ENCODE measurements at regions of chr17 and their contacts with region 1.

Region 1: GRCh38 chr17:35312790-35313711 is 60.4 kb downstream of the SLFN11 start:
- DNase-seq: peak; percentile 94
- ATAC-seq: peak; percentile 93
- H3K4me3 Mint-ChIP-seq: peak overlapping the region; percentile 89
- H3K27ac Mint-ChIP-seq: peak overlapping the region; percentile 90
- H3K4me1 Mint-ChIP-seq: peaks cover 27% of the 10 kb centered on the region
- H3K27me3 Mint-ChIP-seq: no peaks in the 10 kb centered on the region

Region 2: DNA sequence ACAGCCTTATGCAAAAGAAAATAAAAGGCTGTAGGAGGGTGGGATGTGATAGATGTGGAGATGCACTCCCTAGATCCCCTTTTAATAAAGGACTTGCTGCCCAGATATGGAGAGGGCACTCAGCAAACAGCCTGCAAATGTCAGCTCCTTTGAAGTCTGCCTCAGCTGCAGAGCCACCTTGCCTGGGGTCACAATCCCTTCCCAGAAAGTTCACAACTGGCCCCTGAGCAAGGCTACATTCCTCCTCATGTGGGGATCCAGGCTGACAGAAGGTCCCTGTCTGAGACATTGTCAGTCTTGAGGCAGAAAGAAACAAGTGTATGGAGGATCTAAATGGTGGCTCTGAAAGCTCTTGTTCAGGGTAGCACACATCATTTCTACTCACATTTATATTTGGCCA is 24.3 kb after region 1 on chr17:
- CTCF ChIA-PET with region 1: interaction called, 14 read pairs
- POLR2A ChIA-PET with region 1: no interaction called
- DNase-seq: no peak
- ATAC-seq: no peak
- H3K4me3 Mint-ChIP-seq: no peak overlapping the region
- H3K27ac Mint-ChIP-seq: no peak overlapping the region
- H3K4me1 Mint-ChIP-seq: peaks cover 26% of the 10 kb centered on the region
- H3K27me3 Mint-ChIP-seq: peaks cover 21% of the 10 kb centered on the region

Region 3: DNA sequence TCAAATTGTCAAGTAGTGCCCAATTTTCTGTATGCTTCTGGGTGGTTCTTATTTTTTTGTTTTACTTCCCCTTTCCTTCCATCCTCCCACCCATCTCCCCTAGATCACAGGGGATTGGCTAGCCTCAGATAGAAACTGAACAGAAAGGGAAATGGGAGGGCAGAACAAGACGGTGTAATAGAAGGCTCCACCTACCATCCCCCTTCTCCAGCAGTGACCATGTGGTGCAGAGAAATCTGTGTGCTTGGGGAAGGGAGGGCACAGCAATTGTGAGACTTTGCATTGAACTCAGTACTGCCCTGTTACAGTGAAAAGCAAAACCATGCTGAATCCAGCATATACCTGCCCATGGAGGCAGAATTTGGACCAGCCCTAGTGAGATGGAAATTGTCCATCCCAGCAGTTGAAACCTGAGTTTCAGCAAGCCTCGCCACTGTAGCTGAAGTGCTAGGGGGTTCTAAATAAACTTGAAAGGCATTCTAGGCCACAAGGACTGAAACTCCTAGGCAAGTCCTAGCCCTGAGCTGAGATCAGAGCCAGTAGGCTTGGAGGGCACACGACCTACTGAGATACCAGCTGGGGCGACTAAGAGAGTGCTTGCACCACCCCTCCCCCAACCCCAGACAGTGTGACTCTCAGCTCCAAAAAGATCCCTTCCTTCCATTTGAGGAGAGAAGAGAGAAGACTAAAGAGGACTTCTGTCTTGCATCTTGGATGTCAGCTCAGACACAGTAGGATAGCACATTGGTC is 55.2 kb after region 1 on chr17:
- CTCF ChIA-PET with region 1: interaction called, 19 read pairs
- POLR2A ChIA-PET with region 1: interaction called, 14 read pairs
- DNase-seq: peak; percentile 64
- ATAC-seq: peak; percentile 91
- H3K4me3 Mint-ChIP-seq: peak overlapping the region; percentile 23
- H3K27ac Mint-ChIP-seq: peak overlapping the region; percentile 70
- H3K4me1 Mint-ChIP-seq: peaks cover 62% of the 10 kb centered on the region
- H3K27me3 Mint-ChIP-seq: no peaks in the 10 kb centered on the region

Region 4: DNA sequence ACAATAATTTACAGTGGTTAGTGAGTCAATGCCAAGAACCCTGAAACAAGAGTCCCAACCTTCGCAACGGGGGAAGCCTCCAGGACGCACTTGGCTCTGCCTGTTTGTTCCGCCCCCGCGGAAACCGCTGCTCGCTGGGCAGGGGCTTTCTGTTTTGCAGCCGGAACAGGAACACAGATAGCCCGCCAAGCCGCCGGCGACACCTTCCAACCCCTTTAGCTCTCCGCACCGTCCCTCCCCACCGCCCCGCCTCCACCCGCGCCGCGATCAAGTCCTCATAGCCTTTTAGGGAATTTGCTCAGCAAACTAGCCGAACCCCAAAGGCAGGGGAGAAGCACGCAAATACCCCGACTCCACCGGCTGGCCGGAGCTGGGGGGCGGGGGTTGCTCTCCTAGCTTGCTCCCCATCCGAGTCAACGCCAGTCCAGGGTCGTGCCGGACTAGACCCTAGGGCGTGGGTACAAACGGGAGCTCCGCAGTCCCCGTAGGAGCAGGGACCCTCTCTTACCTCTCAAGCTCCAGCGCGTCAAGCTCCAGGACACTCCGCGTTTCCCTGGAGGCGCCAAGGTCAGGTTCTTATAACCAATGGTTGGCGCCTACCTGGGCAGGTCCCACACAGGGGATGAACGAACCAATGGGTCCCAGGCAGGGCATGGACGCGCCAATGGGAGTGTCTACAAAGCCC is 135.3 kb after region 1 on chr17 and contains the start of gene SLFN13:
- CTCF ChIA-PET with region 1: interaction called, 11 read pairs
- POLR2A ChIA-PET with region 1: interaction called, 12 read pairs
- DNase-seq: peak; percentile 91
- ATAC-seq: peak; percentile 98
- H3K4me3 Mint-ChIP-seq: peak within 1 kb of the TSS; percentile 73
- H3K27ac Mint-ChIP-seq: peak within 1 kb of the TSS; percentile 75
- H3K4me1 Mint-ChIP-seq: peaks cover 26% of the 10 kb centered on the region
- H3K27me3 Mint-ChIP-seq: no peaks in the 10 kb centered on the region
- total RNA-seq, gene SLFN13: 56.2 to 56.3 TPM

Region 5: DNA sequence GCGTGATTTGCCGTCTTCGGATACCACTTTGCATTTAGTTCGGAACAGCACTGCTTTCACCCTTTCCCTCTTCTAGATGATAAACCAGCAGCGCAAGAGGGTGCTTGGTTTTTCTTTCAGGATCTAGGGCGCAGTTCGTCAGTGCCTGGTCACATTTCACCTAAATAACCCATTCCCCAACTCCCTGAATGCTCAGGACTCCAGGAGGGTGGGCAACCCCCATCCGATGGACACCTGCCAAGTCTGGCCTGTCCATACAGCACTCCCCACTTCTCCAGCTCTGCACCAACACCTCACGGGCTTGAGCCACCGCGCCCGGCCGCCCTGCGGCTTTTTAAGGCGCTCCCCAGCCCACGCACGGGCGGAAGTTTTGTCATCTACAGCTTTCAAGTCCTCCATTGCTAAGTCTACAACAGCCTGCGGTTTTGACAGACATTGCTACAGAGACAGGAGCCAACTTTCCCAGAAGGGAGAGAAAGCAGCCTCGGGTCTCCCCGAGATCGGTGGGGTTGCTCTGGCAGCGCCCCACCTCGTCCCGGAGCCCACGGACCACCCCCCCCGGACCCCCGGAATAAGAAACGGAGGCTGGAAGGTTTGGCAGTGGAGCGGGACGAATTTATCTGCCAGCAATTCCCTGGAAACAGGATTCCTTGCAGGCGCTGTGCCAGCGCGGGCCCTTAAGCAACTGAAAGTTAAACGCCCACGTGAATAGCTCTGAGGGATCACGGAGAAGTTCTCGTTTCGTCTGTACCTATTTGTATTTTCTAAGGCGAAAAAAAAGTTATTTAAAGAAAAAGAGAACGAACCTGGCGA is 174.1 kb after region 1 on chr17:
- CTCF ChIA-PET with region 1: interaction called, 30 read pairs
- POLR2A ChIA-PET with region 1: interaction called, 13 read pairs
- DNase-seq: peak; percentile 76
- ATAC-seq: peak; percentile 69
- H3K4me3 Mint-ChIP-seq: peak overlapping the region; percentile 76
- H3K27ac Mint-ChIP-seq: peak overlapping the region; percentile 90
- H3K4me1 Mint-ChIP-seq: peaks cover 71% of the 10 kb centered on the region
- H3K27me3 Mint-ChIP-seq: no peaks in the 10 kb centered on the region

Region 6: GRCh38 chr17:35540589-35541404 is 227.7 kb after region 1 on chr17:
- CTCF ChIA-PET with region 1: interaction called, 96 read pairs
- POLR2A ChIA-PET with region 1: interaction called, 31 read pairs
- DNase-seq: peak; percentile 66
- ATAC-seq: peak; percentile 29
- H3K4me3 Mint-ChIP-seq: peak overlapping the region; percentile 82
- H3K27ac Mint-ChIP-seq: peak overlapping the region; percentile 95
- H3K4me1 Mint-ChIP-seq: peaks cover 60% of the 10 kb centered on the region
- H3K27me3 Mint-ChIP-seq: no peaks in the 10 kb centered on the region